A673 (cell line): ENCODE measurements at regions of chr7 and their contacts with region 1.

Region 1: GRCh38 chr7:34596892-34597291 is 61.1 kb upstream of the NPSR1 start:
- DNase-seq: peak; percentile 23
- H3K4me3 ChIP-seq: no peak overlapping the region
- H3K27ac ChIP-seq: no peak overlapping the region
- H3K4me1 ChIP-seq: no peaks in the 10 kb centered on the region
- H3K27me3 ChIP-seq: no peaks in the 10 kb centered on the region
- CTCF ChIP-seq: peak; percentile 55

Region 2: DNA sequence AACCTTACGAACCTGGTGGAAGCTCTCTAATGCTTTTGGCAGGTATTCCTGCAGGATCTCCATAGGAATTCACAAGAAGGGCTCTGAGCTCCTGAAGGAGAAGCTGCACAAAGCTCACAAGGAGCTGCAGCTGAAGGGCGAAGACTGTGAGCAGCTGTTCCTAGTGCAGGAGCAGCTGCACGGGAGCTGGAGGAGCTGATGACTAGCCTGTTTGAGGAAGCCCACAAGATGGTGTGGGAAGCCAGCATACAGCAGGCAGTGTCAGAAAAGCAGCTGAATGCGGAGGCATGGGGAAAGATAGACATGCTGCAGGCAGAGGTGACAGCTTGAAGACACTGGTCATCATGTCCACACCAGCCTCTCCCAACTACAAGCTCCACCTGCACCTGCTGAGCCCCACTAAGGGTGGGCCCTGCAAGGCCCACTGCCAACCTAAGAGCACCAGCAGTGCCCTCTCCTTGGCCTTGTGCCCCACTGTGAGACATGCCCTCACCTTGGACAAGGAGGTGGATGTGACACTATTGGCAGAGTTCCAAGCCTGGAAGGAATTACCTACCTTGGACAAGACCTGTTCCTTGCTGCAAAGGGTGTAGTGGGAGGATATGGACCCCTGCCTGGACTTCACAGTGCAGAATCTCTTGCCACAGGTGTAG is 1216.9 kb before region 1 on chr7:
- CTCF ChIA-PET with region 1: interaction called, 15 read pairs
- POLR2A ChIA-PET with region 1: no interaction called
- intact Hi-C with region 1: no loop called
- DNase-seq: no peak
- H3K4me3 ChIP-seq: no peak overlapping the region
- H3K27ac ChIP-seq: no peak overlapping the region
- H3K4me1 ChIP-seq: no peaks in the 10 kb centered on the region
- H3K27me3 ChIP-seq: no peaks in the 10 kb centered on the region
- CTCF ChIP-seq: no peak

Region 3: DNA sequence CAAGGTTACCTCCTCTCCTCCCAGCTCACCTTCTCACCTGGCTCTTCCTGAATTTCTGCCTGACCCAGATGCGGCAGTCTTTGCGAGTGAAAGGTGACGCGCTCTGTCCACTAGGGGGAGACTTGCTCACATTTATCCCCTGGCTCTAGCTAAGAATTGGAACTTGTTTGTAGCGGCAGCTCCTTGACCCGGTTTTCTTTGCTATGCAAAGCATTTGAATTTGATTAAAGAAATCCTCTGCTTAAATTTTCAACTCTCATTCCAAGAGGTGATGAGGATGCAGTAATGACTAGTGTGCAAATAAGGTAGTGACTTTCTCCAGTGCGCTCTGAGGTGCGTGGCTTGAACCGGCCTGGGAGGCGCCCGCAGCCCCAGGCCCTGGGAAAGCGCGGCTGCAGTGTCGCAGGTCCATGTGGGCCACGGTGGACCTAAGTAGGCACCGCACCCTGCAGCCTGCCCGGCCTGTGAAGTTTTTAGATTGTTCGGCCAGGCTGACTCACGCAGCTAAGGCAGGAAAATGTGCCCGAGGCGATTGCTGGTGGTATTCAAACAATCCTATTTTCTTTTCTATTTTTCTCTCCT is 275.8 kb before region 1 on chr7:
- CTCF ChIA-PET with region 1: no interaction called
- POLR2A ChIA-PET with region 1: no interaction called
- intact Hi-C with region 1: loop called (anchors 2 kb)
- DNase-seq: peak; percentile 66
- H3K4me3 ChIP-seq: no peak overlapping the region
- H3K27ac ChIP-seq: no peak overlapping the region
- H3K4me1 ChIP-seq: no peaks in the 10 kb centered on the region
- H3K27me3 ChIP-seq: no peaks in the 10 kb centered on the region
- CTCF ChIP-seq: peak; percentile 94